ENCODE measurements at regions of chr2 and their contacts with region 1.

Region 1: DNA sequence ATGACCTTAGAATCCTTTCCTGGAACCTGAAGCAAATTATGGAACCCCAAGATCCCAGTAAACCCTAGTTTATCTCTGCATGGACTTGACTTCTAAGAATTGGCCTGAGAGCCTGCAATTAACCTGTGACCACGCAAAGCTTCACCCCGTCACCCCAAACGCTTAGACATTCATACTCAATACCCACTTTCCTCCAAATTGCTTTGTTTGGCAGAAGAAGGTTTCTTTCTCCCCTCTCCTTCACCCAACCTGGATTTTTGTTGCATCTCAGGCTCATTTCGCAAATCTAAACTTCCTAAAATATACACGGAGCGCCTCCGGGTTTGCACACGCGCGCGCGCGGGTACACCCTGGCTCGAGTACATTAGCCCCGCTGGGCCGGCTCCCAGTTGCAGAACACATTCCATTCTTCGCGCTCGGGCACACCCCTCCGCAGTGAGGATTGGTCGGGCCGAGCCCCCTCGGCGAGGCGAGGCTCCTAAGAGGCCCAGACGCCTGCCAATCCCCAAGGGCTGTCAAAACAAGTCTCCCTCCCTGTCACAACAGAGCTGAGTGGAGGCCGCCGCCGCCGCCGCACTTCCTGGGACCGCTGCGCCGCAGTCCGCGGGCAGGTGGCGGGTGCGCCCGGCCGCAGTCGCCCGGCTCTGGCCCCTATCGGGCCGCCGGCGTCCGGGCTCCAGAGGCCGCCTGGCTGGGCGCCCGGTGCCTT is at the start of gene PLCL1:
- DNase-seq: peak; percentile 94
- ATAC-seq: peak; percentile 99
- H3K4me3 Mint-ChIP-seq: peak within 1 kb of the TSS; percentile 89
- H3K27ac Mint-ChIP-seq: peak within 1 kb of the TSS; percentile 84
- H3K4me1 Mint-ChIP-seq: peaks cover 45% of the 10 kb centered on the region
- H3K27me3 Mint-ChIP-seq: peaks cover 2% of the 10 kb centered on the region
- total RNA-seq, gene PLCL1: 1.6 to 1.7 TPM

Region 2: GRCh38 chr2:197838036-197838435 is 33.8 kb after region 1 on chr2:
- CTCF ChIA-PET with region 1: interaction called, 12 read pairs
- POLR2A ChIA-PET with region 1: interaction called, 5 read pairs
- intact Hi-C with region 1: loop called (anchors 2 kb)
- DNase-seq: peak; percentile 51
- ATAC-seq: peak; percentile 98
- H3K4me3 Mint-ChIP-seq: peak overlapping the region; percentile 53
- H3K27ac Mint-ChIP-seq: peak overlapping the region; percentile 59
- H3K4me1 Mint-ChIP-seq: peaks cover 59% of the 10 kb centered on the region
- H3K27me3 Mint-ChIP-seq: no peaks in the 10 kb centered on the region

Region 3: GRCh38 chr2:197889041-197889440 is 84.8 kb after region 1 on chr2:
- CTCF ChIA-PET with region 1: interaction called, 3 read pairs
- POLR2A ChIA-PET with region 1: interaction called, 3 read pairs
- intact Hi-C with region 1: loop called (anchors 2 to 5 kb)
- DNase-seq: peak; percentile 58
- ATAC-seq: peak; percentile 87
- H3K4me3 Mint-ChIP-seq: peak overlapping the region; percentile 38
- H3K27ac Mint-ChIP-seq: peak overlapping the region; percentile 89
- H3K4me1 Mint-ChIP-seq: peaks cover 57% of the 10 kb centered on the region
- H3K27me3 Mint-ChIP-seq: no peaks in the 10 kb centered on the region

Region 4: GRCh38 chr2:197904446-197904845 is 100.2 kb after region 1 on chr2:
- CTCF ChIA-PET with region 1: no interaction called
- POLR2A ChIA-PET with region 1: no interaction called
- intact Hi-C with region 1: no loop called
- DNase-seq: peak; percentile 49
- ATAC-seq: peak; percentile 95
- H3K4me3 Mint-ChIP-seq: no peak overlapping the region
- H3K27ac Mint-ChIP-seq: peak overlapping the region; percentile 32
- H3K4me1 Mint-ChIP-seq: peaks cover 36% of the 10 kb centered on the region
- H3K27me3 Mint-ChIP-seq: peaks cover 13% of the 10 kb centered on the region

Region 5: GRCh38 chr2:197972061-197972460 is 167.9 kb after region 1 on chr2:
- CTCF ChIA-PET with region 1: no interaction called
- POLR2A ChIA-PET with region 1: no interaction called
- intact Hi-C with region 1: no loop called
- DNase-seq: no peak
- ATAC-seq: no peak
- H3K4me3 Mint-ChIP-seq: no peak overlapping the region
- H3K27ac Mint-ChIP-seq: no peak overlapping the region
- H3K4me1 Mint-ChIP-seq: peaks cover 39% of the 10 kb centered on the region
- H3K27me3 Mint-ChIP-seq: no peaks in the 10 kb centered on the region

Region 6: GRCh38 chr2:198004921-198005829 is 201.0 kb after region 1 on chr2:
- CTCF ChIA-PET with region 1: no interaction called
- POLR2A ChIA-PET with region 1: no interaction called
- intact Hi-C with region 1: loop called in 1 of 2 experiments (anchors 5 kb)
- DNase-seq: peak; percentile 71
- ATAC-seq: peak; percentile 67
- H3K4me3 Mint-ChIP-seq: peak overlapping the region; percentile 32
- H3K27ac Mint-ChIP-seq: peak overlapping the region; percentile 88
- H3K4me1 Mint-ChIP-seq: peaks cover 83% of the 10 kb centered on the region
- H3K27me3 Mint-ChIP-seq: no peaks in the 10 kb centered on the region

Region 7: GRCh38 chr2:198053776-198054698 is 249.8 kb after region 1 on chr2:
- CTCF ChIA-PET with region 1: interaction called, 5 read pairs
- POLR2A ChIA-PET with region 1: no interaction called
- intact Hi-C with region 1: loop called (anchors 1 kb)
- DNase-seq: peak; percentile 70
- ATAC-seq: peak; percentile 95
- H3K4me3 Mint-ChIP-seq: no peak overlapping the region
- H3K27ac Mint-ChIP-seq: peak overlapping the region; percentile 7
- H3K4me1 Mint-ChIP-seq: peaks cover 29% of the 10 kb centered on the region
- H3K27me3 Mint-ChIP-seq: no peaks in the 10 kb centered on the region

Region 8: DNA sequence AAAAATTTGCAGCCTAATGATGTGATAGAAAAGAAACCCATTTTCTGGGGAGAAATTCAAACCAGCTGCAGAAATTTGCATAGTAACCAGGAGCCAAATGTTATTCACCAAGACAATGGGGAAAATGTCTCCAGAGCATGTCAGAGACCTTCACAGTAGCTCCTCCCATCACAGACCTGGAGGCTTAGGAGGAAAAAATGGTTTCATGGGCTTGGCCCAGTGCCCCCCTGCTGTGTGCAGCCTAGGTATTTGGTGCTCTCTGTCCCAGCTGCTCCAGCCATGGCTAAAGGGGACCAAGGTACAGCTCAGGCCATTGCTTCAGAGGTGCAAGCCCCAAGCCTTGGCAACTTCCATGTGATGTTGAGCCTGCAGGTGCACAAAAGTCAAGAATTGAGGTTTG is 353.1 kb after region 1 on chr2:
- CTCF ChIA-PET with region 1: no interaction called
- POLR2A ChIA-PET with region 1: no interaction called
- intact Hi-C with region 1: no loop called
- DNase-seq: no peak
- ATAC-seq: no peak
- H3K4me3 Mint-ChIP-seq: no peak overlapping the region
- H3K27ac Mint-ChIP-seq: no peak overlapping the region
- H3K4me1 Mint-ChIP-seq: no peaks in the 10 kb centered on the region
- H3K27me3 Mint-ChIP-seq: no peaks in the 10 kb centered on the region

Region 9: GRCh38 chr2:198296665-198297308 is 492.6 kb after region 1 on chr2:
- CTCF ChIA-PET with region 1: interaction called, 9 read pairs
- POLR2A ChIA-PET with region 1: no interaction called
- intact Hi-C with region 1: loop called (anchors 1 kb)
- DNase-seq: peak; percentile 76
- ATAC-seq: peak; percentile 83
- H3K4me3 Mint-ChIP-seq: no peak overlapping the region
- H3K27ac Mint-ChIP-seq: no peak overlapping the region
- H3K4me1 Mint-ChIP-seq: no peaks in the 10 kb centered on the region
- H3K27me3 Mint-ChIP-seq: peaks cover 9% of the 10 kb centered on the region

Measured in activated CD4-positive, alpha-beta T cell treated with anti-CD3 and anti-CD28 coated beads for 36 hours (primary cell).